ENCODE measurements at regions of chrX and their contacts with region 1.

Region 1: DNA sequence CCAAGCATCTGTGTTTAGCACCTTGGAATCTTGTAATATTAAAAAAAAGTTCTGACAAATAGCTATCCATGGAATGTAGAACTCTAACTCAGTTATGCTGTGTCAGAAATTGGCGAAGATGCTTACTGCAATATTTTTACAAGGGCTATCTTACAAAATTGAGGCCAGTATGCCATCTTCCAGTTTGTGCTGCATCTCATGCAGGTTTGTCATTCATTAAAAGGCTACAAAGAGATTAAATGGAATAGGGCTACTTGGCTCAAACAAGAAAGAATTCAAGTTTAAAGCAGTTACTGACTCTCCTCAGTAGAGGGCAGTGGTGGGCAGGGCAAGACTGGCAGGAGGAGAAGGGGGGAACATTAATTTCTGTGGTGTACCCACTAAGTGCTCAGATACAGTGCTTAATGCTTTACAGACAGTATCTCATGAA is 66.5 kb downstream of the SHROOM4 start:
- DNase-seq: peak; percentile 15
- ATAC-seq: no peak
- H3K4me3 ChIP-seq: no peak overlapping the region
- H3K27ac ChIP-seq: no peak overlapping the region
- H3K4me1 ChIP-seq: no peaks in the 10 kb centered on the region
- H3K27me3 ChIP-seq: no peaks in the 10 kb centered on the region
- CTCF ChIP-seq: peak; percentile 75

Region 2: GRCh38 chrX:50905334-50905733 is 157.8 kb after region 1 on chrX:
- CTCF ChIA-PET with region 1: no interaction called
- POLR2A ChIA-PET with region 1: no interaction called
- in situ Hi-C with region 1: no loop called
- intact Hi-C with region 1: loop called (anchors 1 kb)
- DNase-seq: no peak
- ATAC-seq: no peak
- H3K4me3 ChIP-seq: no peak overlapping the region
- H3K27ac ChIP-seq: no peak overlapping the region
- H3K4me1 ChIP-seq: no peaks in the 10 kb centered on the region
- H3K27me3 ChIP-seq: no peaks in the 10 kb centered on the region
- CTCF ChIP-seq: peak; percentile 52

Region 3: GRCh38 chrX:50988649-50989048 is 241.2 kb after region 1 on chrX:
- CTCF ChIA-PET with region 1: interaction called, 3 read pairs
- POLR2A ChIA-PET with region 1: no interaction called
- in situ Hi-C with region 1: no loop called
- intact Hi-C with region 1: loop called (anchors 5 kb)
- DNase-seq: peak; percentile 13
- ATAC-seq: no peak
- H3K4me3 ChIP-seq: no peak overlapping the region
- H3K27ac ChIP-seq: no peak overlapping the region
- H3K4me1 ChIP-seq: no peaks in the 10 kb centered on the region
- H3K27me3 ChIP-seq: no peaks in the 10 kb centered on the region
- CTCF ChIP-seq: peak; percentile 71

Measured in Panc1 (cell line).